ENCODE measurements at regions of chr2 and their contacts with region 1.

Region 1: GRCh38 chr2:69914170-69914960 is 544 bp upstream of the MXD1 start:
- DNase-seq: peak; percentile 98
- CTCF ChIP-seq: peak; percentile 43

Region 2: GRCh38 chr2:69345434-69345833 is 568.9 kb before region 1 on chr2:
- CTCF ChIA-PET with region 1: no interaction called
- POLR2A ChIA-PET with region 1: no interaction called
- DNase-seq: no peak
- CTCF ChIP-seq: no peak

Region 3: GRCh38 chr2:69902213-69902922 is 12.0 kb before region 1 on chr2:
- CTCF ChIA-PET with region 1: interaction called, 9 read pairs
- POLR2A ChIA-PET with region 1: interaction called, 19 read pairs
- DNase-seq: no peak
- CTCF ChIP-seq: no peak

Region 4: GRCh38 chr2:70070541-70071268 is 156.3 kb after region 1 on chr2:
- CTCF ChIA-PET with region 1: interaction called, 68 read pairs
- POLR2A ChIA-PET with region 1: interaction called, 18 read pairs
- DNase-seq: peak; percentile 87
- CTCF ChIP-seq: peak; percentile 79

Region 5: GRCh38 chr2:70142590-70143313 is 228.4 kb after region 1 on chr2:
- CTCF ChIA-PET with region 1: interaction called, 59 read pairs
- POLR2A ChIA-PET with region 1: interaction called, 19 read pairs
- DNase-seq: peak; percentile 97
- CTCF ChIP-seq: peak; percentile 95

Region 6: DNA sequence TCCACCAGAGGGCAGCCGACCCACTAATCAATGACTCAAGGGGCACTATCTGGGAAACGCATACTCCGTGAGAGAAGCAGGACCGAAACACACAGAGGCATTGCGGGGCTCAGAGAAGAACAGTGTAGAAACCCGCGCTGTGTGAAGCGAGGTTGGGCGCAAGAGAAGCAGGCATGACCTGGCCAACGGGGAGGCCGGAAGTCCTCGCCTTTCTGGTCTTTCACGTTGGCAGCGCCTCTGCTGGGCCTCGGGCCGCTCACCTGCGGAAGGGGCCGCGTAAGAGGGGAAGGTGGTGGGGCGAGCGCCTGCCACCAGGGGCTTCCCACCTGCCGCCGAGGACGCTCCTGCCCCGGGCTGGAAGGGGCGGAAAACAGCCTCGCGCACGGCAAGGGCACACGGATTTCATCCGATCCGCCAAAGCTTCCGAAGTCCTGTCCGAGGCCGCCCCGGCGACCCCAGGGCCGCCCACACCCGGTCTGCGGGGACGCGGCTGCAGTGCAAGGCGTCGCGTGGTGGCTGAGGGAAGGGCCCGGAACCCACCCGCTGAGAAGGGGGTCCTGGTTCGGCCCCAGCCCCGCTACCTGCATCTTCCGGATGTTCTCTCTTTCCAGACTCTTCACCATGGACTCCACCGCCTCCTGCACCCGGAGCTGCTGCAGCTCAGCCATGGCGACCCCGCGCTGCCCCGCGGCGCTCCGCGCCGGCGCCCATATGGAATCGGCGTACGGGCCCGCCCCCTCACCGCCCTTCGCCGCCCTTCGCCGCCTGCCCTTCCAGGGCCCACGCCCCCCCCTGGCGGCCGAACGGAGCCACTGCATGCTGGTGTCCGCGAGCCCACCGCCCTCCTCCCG is 387.2 kb after region 1 on chr2 and contains the start of gene FAM136A:
- CTCF ChIA-PET with region 1: interaction called, 47 read pairs
- POLR2A ChIA-PET with region 1: interaction called, 3 read pairs
- DNase-seq: peak; percentile 93
- CTCF ChIP-seq: peak; percentile 93

Measured in GM10248 (cell line).